ENCODE measurements at regions of chr4 and their contacts with region 1.

Region 1: DNA sequence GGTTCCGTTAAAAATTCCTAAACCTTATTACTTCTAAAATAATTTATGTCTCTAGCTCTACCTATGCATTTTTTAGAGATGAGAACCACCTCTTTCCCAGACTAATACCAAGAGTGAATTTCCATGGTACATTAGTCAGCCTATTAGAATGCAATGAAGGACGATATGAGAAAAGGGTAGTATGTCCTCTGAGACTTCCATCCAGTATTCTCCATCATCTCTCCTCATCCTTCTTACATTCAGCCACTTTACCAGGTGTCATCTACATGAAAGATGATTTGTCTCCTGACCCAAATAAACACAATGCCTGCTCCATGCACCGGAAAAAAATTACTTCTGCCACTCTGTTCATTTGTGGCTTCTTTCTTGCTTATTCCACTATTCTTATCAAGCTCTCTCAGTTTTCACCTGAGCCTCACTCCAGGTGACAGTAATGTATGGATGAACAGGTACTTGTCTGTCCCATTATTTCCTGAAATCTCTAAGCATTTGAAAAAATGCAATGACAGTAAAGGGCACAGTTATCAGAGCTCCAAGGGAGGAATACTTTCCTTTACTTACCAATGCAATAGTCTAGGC is 97.9 kb downstream of the MAB21L2 start:
- DNase-seq: no peak
- ATAC-seq: no peak
- H3K4me3 ChIP-seq: no peak overlapping the region
- H3K4me3 Mint-ChIP-seq: no peak overlapping the region
- H3K27ac ChIP-seq: no peak overlapping the region
- H3K27ac Mint-ChIP-seq: no peak overlapping the region
- H3K4me1 ChIP-seq: no peaks in the 10 kb centered on the region
- H3K4me1 Mint-ChIP-seq: peaks cover 0 to 6% (median 0%) of the 10 kb centered on the region in 7 donors
- H3K27me3 ChIP-seq: no peaks in the 10 kb centered on the region
- H3K27me3 Mint-ChIP-seq: no peaks in the 10 kb centered on the region

Region 2: DNA sequence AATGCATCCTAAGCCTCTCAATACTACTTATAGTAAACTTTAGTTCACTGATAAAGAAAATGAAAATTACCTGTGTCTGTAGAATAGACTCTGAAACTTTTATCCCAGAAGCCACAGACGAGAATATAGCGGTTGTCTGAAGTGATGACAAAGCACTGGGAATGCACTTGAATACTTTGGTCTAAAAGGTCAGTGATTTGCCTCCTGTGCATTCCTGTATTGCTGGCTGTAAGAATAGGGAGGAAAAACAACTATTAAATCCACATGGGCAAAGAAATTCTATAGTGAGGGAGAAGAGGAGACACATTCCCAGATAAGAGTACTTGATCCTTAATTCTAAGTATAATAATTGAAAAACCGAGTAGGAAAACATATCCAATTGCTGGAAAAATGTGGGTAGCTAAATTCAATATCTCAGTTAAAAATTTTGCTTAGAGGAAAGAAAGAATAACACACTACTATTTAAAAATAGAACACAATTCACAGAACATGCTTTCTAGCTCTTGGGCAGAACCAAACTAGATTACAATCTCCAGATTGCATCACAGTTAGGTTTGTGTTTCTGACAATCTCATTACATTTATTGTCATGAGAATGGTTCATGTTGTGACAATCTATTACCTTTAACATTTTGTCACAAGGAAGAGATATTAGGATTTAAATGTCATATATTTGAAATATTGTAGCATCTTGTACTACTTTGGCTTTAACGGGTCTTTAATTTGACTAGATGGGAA is 369.5 kb before region 1 on chr4:
- CTCF ChIA-PET with region 1: no interaction called
- POLR2A ChIA-PET with region 1: no interaction called
- intact Hi-C with region 1: no loop called
- DNase-seq: no peak
- ATAC-seq: no peak
- H3K4me3 ChIP-seq: no peak overlapping the region
- H3K4me3 Mint-ChIP-seq: no peak overlapping the region
- H3K27ac ChIP-seq: no peak overlapping the region
- H3K27ac Mint-ChIP-seq: no peak overlapping the region
- H3K4me1 ChIP-seq: no peaks in the 10 kb centered on the region
- H3K4me1 Mint-ChIP-seq: no peaks in the 10 kb centered on the region
- H3K27me3 ChIP-seq: no peaks in the 10 kb centered on the region
- H3K27me3 Mint-ChIP-seq: no peaks in the 10 kb centered on the region

Region 3: GRCh38 chr4:150751648-150752047 is 71.8 kb after region 1 on chr4:
- CTCF ChIA-PET with region 1: no interaction called
- POLR2A ChIA-PET with region 1: no interaction called
- intact Hi-C with region 1: loop called in 1 of 2 experiments (anchors 2 kb)
- DNase-seq: no peak
- ATAC-seq: no peak
- H3K4me3 ChIP-seq: no peak overlapping the region
- H3K4me3 Mint-ChIP-seq: no peak overlapping the region
- H3K27ac ChIP-seq: no peak overlapping the region
- H3K27ac Mint-ChIP-seq: no peak overlapping the region
- H3K4me1 ChIP-seq: no peaks in the 10 kb centered on the region
- H3K4me1 Mint-ChIP-seq: peaks cover 0 to 13% (median 6%) of the 10 kb centered on the region in 7 donors
- H3K27me3 ChIP-seq: no peaks in the 10 kb centered on the region
- H3K27me3 Mint-ChIP-seq: no peaks in the 10 kb centered on the region